Stomach (tissue), 19 donors: ENCODE measurements at regions of chr7 and their contacts with region 1.

Region 1: DNA sequence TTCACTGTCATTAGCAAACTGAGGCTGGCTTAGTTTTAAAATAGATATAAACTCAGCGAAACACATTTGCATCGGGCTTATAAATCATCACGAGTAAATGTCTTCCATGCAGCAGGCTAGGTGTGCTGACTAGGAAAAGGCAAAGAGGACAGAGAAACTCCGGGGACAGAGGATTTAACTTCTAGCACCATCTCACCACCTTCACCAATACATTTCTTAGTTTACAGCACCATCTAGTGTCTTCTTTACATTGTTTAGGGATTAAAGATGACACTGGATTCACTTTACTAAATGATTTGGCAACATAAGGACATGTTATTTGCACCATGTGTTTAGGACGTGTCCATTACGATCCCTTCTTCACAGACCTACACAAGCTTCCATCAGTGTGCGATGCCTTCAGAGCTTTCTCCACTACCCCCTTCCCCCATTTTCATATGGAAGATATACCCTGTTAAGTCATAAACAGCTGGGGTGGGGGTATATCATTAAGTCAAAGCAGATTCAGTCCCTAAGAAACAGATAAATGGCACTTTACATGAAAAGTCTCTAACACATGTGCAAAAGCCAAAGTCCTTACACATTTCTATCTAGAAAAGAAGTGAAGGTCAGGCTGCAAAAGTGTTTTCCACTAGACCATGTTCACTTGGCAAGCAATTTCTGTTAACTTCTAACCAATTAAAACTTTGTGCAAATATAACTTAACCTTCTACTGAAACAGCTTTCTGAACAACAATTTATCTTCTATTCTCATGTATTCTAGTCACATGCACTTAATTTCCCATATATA is 103.3 kb downstream of the GRB10 start:
- DNase-seq: peak in 1 of 2 donors; percentile 68
- H3K4me3 ChIP-seq: no peak overlapping the region
- H3K27ac ChIP-seq: no peak overlapping the region
- H3K4me1 ChIP-seq: peaks cover 14 to 74% (median 41%) of the 10 kb centered on the region in 4 donors
- H3K27me3 ChIP-seq: no peaks in the 10 kb centered on the region
- CTCF ChIP-seq: peak in 2 of 7 experiments; percentile 14 to 39
- EP300 ChIP-seq: no peak
- POLR2A ChIP-seq: no peak

Region 2: GRCh38 chr7:50467817-50468610 is 211.4 kb before region 1 on chr7:
- intact Hi-C with region 1: loop called (anchors 10 kb)
- DNase-seq: peak; percentile 87 to 92
- H3K4me3 ChIP-seq: peak overlapping the region in 2 of 4 donors; percentile 13 to 35
- H3K27ac ChIP-seq: no peak overlapping the region
- H3K4me1 ChIP-seq: peaks cover 6 to 11% (median 8%) of the 10 kb centered on the region in 4 donors
- H3K27me3 ChIP-seq: no peaks in the 10 kb centered on the region
- CTCF ChIP-seq: peak in 5 of 7 experiments; percentile 76 to 90 (median 85)
- EP300 ChIP-seq: no peak
- POLR2A ChIP-seq: no peak

Region 3: DNA sequence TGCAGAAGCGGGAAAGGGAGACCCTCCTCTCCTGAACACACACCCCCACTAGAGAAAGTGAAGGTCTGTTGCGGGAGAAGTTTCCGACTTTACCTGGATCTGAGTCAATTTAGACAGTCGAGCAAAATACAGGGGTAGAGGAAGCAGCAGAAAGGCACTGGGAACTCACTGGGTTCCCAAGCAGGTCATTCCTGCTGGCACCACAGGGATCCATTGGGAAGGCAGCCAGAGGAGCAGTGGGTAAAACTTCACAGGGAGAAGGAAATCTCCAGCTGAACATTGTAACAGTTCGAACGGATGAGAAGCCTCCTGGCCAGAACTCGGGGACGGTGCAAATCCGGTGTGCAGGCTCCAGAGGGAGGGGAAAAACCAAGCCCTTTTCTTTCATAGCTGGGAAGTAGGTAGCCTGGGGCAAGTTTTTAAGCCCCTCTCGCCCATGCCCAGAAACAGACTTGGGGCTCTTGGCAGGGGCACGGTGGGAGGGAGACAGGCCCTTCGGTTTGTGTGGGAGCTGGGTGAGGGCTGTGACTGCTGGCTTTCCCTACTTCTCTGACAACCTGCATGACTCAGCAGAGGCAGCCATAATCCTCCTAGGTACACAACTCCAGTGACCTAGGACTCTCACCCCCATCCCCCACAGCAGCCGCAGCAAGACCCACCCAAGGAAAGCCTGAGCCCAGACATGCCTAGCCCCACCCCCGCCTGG is 166.1 kb before region 1 on chr7:
- intact Hi-C with region 1: no loop called
- DNase-seq: no peak
- H3K4me3 ChIP-seq: no peak overlapping the region
- H3K27ac ChIP-seq: no peak overlapping the region
- H3K4me1 ChIP-seq: no peaks in the 10 kb centered on the region
- H3K27me3 ChIP-seq: no peaks in the 10 kb centered on the region
- CTCF ChIP-seq: no peak
- EP300 ChIP-seq: no peak
- POLR2A ChIP-seq: no peak

Region 4: GRCh38 chr7:50534690-50535290 is 144.6 kb before region 1 on chr7:
- intact Hi-C with region 1: no loop called
- DNase-seq: peak in 1 of 2 donors; percentile 52
- H3K4me3 ChIP-seq: no peak overlapping the region
- H3K27ac ChIP-seq: no peak overlapping the region
- H3K4me1 ChIP-seq: no peaks in the 10 kb centered on the region
- H3K27me3 ChIP-seq: no peaks in the 10 kb centered on the region
- CTCF ChIP-seq: no peak
- EP300 ChIP-seq: no peak
- POLR2A ChIP-seq: no peak

Region 5: GRCh38 chr7:50761713-50762112 is 82.3 kb after region 1 on chr7:
- intact Hi-C with region 1: no loop called
- DNase-seq: no peak
- H3K4me3 ChIP-seq: no peak overlapping the region
- H3K27ac ChIP-seq: no peak overlapping the region
- H3K4me1 ChIP-seq: peaks cover 0 to 28% (median 10%) of the 10 kb centered on the region in 4 donors
- H3K27me3 ChIP-seq: no peaks in the 10 kb centered on the region
- CTCF ChIP-seq: no peak
- EP300 ChIP-seq: no peak
- POLR2A ChIP-seq: no peak